Activated CD4-positive, alpha-beta T cell treated with anti-CD3 and anti-CD28 coated beads for 36 hours (primary cell): ENCODE measurements at regions of chrX and their contacts with region 1.

Region 1: GRCh38 chrX:109732780-109733657 is at the start of gene ACSL4:
- DNase-seq: peak; percentile 91
- ATAC-seq: peak; percentile 77
- H3K4me3 Mint-ChIP-seq: peak within 1 kb of the TSS; percentile 82
- H3K27ac Mint-ChIP-seq: peak within 1 kb of the TSS; percentile 99
- H3K4me1 Mint-ChIP-seq: peaks cover 22% of the 10 kb centered on the region
- H3K27me3 Mint-ChIP-seq: no peaks in the 10 kb centered on the region
- total RNA-seq, gene ACSL4: 44.0 to 64.5 TPM

Region 2: DNA sequence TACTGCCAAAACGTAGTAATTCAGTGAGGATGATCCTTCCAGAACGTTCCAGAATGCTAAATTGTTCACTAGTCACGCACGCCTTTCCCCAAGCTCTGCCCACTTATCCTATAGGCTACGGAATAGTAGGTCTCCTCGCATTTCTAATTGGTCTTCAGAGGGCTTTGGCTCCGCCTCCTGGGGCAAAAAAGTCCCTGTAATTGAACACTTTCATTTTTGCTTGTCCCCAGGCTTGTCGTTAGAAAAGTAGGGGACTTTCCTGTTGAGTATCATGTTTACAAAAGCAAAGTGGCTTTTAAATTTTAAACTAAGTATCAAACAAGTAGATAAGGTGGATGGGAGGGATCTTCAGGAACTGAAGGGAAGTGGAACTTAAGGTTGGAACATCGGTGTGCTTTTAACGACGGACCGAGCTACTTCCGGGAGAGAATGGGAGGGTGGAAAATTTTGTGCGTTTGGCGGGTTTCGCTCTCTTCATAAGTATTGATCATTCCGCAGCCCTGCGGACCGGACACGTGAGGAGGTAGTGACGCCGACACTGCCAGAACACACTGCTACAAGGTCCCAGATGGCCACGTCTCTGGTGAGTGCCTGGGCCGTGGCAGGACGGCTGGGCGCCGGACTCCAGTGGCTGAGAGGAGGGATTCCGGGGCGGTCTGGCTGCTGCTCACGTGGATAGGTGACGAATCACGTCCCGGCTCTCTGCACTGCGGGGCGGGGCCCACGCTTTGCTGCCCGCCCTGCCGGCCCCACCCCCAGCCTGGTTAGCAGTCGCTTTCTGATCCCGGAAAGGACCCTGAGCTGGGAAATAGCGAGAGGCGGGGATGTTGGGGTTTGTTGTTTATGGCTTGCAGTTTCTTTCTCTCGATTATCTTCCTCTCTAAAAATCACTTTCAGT is 196.3 kb before region 1 on chrX and contains the start of gene NXT2:
- CTCF ChIA-PET with region 1: no interaction called
- POLR2A ChIA-PET with region 1: no interaction called
- intact Hi-C with region 1: loop called (anchors 1 to 2 kb)
- DNase-seq: peak; percentile 91
- ATAC-seq: peak; percentile 98
- H3K4me3 Mint-ChIP-seq: peak within 1 kb of the TSS; percentile 89
- H3K27ac Mint-ChIP-seq: peak within 1 kb of the TSS; percentile 99
- H3K4me1 Mint-ChIP-seq: peaks cover 14% of the 10 kb centered on the region
- H3K27me3 Mint-ChIP-seq: peaks cover 5% of the 10 kb centered on the region
- total RNA-seq, gene NXT2: 10.9 to 11.6 TPM

Region 3: GRCh38 chrX:109685656-109686078 is 47.4 kb before region 1 on chrX:
- CTCF ChIA-PET with region 1: no interaction called
- POLR2A ChIA-PET with region 1: interaction called, 4 read pairs
- intact Hi-C with region 1: loop called (anchors 5 kb)
- DNase-seq: peak; percentile 18
- ATAC-seq: peak; percentile 95
- H3K4me3 Mint-ChIP-seq: no peak overlapping the region
- H3K27ac Mint-ChIP-seq: peak overlapping the region; percentile 87
- H3K4me1 Mint-ChIP-seq: peaks cover 25% of the 10 kb centered on the region
- H3K27me3 Mint-ChIP-seq: no peaks in the 10 kb centered on the region

Region 4: GRCh38 chrX:109709129-109709631 is 23.8 kb before region 1 on chrX:
- CTCF ChIA-PET with region 1: interaction called, 5 read pairs
- POLR2A ChIA-PET with region 1: no interaction called
- intact Hi-C with region 1: loop called (anchors 1 to 2 kb)
- DNase-seq: no peak
- ATAC-seq: peak; percentile 68
- H3K4me3 Mint-ChIP-seq: peak overlapping the region; percentile 43
- H3K27ac Mint-ChIP-seq: peak overlapping the region; percentile 84
- H3K4me1 Mint-ChIP-seq: peaks cover 72% of the 10 kb centered on the region
- H3K27me3 Mint-ChIP-seq: no peaks in the 10 kb centered on the region

Region 5: GRCh38 chrX:109840585-109840984 is 107.6 kb after region 1 on chrX:
- CTCF ChIA-PET with region 1: no interaction called
- POLR2A ChIA-PET with region 1: interaction called, 5 read pairs
- intact Hi-C with region 1: loop called (anchors 1 kb)
- DNase-seq: peak; percentile 28
- ATAC-seq: peak; percentile 50
- H3K4me3 Mint-ChIP-seq: no peak overlapping the region
- H3K27ac Mint-ChIP-seq: no peak overlapping the region
- H3K4me1 Mint-ChIP-seq: peaks cover 12% of the 10 kb centered on the region
- H3K27me3 Mint-ChIP-seq: no peaks in the 10 kb centered on the region

Region 6: DNA sequence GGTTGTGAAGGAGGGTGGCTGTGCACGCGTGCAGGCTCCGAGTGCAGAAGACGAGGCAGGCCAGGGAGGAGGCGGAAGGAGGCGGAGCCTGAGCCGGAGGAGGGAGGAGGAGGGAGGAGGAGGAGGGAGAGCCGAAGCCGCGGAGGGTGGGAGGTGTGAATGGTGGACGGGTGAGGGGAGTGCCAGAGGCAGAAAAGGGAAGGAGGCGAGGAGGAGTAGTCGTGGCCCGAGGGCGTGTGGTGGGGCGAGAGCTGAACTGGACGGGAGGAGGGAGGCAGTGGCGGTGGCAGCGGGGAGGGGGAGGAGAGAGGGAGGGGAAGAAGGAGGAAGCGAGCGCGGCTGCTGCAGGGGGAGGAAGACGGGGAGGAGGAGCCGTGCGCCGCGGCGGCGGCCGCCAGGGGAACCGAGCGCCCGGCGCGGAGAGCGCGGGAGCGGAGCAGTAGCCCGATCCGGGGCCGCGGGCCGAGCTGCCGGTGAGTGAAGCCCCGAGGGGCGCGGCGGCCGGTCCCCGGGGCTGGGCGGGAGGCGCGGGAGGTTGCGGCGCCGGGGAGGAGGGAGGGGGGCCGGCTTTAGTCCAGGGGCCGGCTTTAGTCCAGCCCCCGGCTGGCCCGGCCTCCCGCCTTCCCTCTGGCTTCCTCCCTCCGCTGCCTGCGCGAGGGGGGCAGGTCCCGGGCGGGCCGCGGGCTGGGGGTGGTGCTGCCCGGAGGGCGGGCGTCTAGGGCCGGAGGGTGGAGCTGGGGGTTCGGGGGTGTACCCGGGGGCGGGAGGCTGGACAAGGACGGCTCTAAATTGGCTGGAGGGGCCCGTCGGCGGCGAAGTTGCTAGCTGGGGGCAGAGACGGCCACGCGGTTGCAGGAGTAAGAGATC is 269.5 kb after region 1 on chrX and contains the start of gene TMEM164:
- CTCF ChIA-PET with region 1: no interaction called
- POLR2A ChIA-PET with region 1: no interaction called
- intact Hi-C with region 1: loop called in 1 of 2 experiments (anchors 1 kb)
- DNase-seq: peak; percentile 87
- ATAC-seq: peak; percentile 84
- H3K4me3 Mint-ChIP-seq: peak within 1 kb of the TSS; percentile 81
- H3K27ac Mint-ChIP-seq: peak within 1 kb of the TSS; percentile 74
- H3K4me1 Mint-ChIP-seq: peaks cover 27% of the 10 kb centered on the region
- H3K27me3 Mint-ChIP-seq: no peaks in the 10 kb centered on the region
- total RNA-seq, gene TMEM164: 10.5 to 12.2 TPM